H1 (cell line): ENCODE measurements at regions of chr1 and their contacts with region 1.

Region 1: DNA sequence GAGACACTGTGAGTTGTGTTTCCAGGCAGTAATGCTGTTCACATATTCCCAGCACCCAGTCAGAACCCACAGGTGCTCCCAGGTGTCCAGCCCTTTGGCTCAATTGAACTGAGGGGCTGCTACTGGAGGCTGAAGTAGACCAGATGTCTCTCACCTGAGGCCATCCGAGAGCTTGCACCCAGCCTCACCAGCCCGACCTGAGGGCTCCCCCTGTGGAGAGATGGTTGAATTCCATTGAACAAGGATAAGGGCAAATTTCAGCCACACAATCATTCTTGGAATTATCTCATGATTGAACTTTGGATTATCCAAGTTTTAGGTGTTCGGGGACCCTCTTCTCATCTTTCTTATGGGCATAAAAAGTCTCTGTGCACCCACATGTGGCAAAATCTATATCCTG is 52.1 kb downstream of the OBSCN start:
- DNase-seq: peak in 1 of 2 experiments; percentile 50
- H3K4me3 ChIP-seq: no peak overlapping the region
- H3K27ac ChIP-seq: no peak overlapping the region
- H3K4me1 ChIP-seq: no peaks in the 10 kb centered on the region
- H3K27me3 ChIP-seq: no peaks in the 10 kb centered on the region
- CTCF ChIP-seq: peak; percentile 53 to 58 (median 55)
- EP300 ChIP-seq: no peak
- POLR2A ChIP-seq: no peak
- RAD21 ChIP-seq: peak; percentile 37 to 46

Region 2: GRCh38 chr1:228162286-228163003 is 97.5 kb before region 1 on chr1:
- CTCF ChIA-PET with region 1: no interaction called
- POLR2A ChIA-PET with region 1: no interaction called
- DNase-seq: no peak
- H3K4me3 ChIP-seq: no peak overlapping the region
- H3K27ac ChIP-seq: no peak overlapping the region
- H3K4me1 ChIP-seq: peaks cover 0 to 12% (median 8%) of the 10 kb centered on the region in 4 experiments; a peak in 6 of 7 replicates
- H3K27me3 ChIP-seq: peaks cover 0 to 3% (median 0%) of the 10 kb centered on the region in 4 experiments; a peak in 4 of 7 replicates
- CTCF ChIP-seq: no peak
- EP300 ChIP-seq: no peak
- POLR2A ChIP-seq: no peak
- RAD21 ChIP-seq: no peak

Region 3: GRCh38 chr1:228172591-228173580 is 87.1 kb before region 1 on chr1:
- CTCF ChIA-PET with region 1: no interaction called
- POLR2A ChIA-PET with region 1: no interaction called
- DNase-seq: no peak
- H3K4me3 ChIP-seq: no peak overlapping the region
- H3K27ac ChIP-seq: no peak overlapping the region
- H3K4me1 ChIP-seq: peaks cover 0 to 6% (median 4%) of the 10 kb centered on the region in 4 experiments; a peak in 4 of 7 replicates
- H3K27me3 ChIP-seq: no peaks in the 10 kb centered on the region
- CTCF ChIP-seq: no peak
- EP300 ChIP-seq: no peak
- POLR2A ChIP-seq: no peak
- RAD21 ChIP-seq: no peak

Region 4: GRCh38 chr1:228274452-228275221 is 14.7 kb after region 1 on chr1:
- CTCF ChIA-PET with region 1: interaction called, 12 read pairs
- POLR2A ChIA-PET with region 1: interaction called, 3 read pairs
- DNase-seq: no peak
- H3K4me3 ChIP-seq: peak overlapping the region in 1 of 4 experiments; percentile 71; a peak in 1 of 8 replicates
- H3K27ac ChIP-seq: no peak overlapping the region
- H3K4me1 ChIP-seq: peaks cover 0 to 7% (median 1%) of the 10 kb centered on the region in 4 experiments; a peak in 4 of 7 replicates
- H3K27me3 ChIP-seq: peaks cover 0 to 5% (median 3%) of the 10 kb centered on the region in 4 experiments; a peak in 2 of 7 replicates
- CTCF ChIP-seq: peak in 1 of 3 experiments; percentile 19; a peak in 1 of 4 replicates
- EP300 ChIP-seq: no peak
- POLR2A ChIP-seq: no peak
- RAD21 ChIP-seq: no peak; a peak in 1 of 4 replicates

Region 5: GRCh38 chr1:228281933-228282645 is 22.1 kb after region 1 on chr1:
- CTCF ChIA-PET with region 1: interaction called, 16 read pairs
- POLR2A ChIA-PET with region 1: no interaction called
- DNase-seq: no peak
- H3K4me3 ChIP-seq: no peak overlapping the region
- H3K27ac ChIP-seq: no peak overlapping the region
- H3K4me1 ChIP-seq: no peaks in the 10 kb centered on the region; a peak in 1 of 7 replicates
- H3K27me3 ChIP-seq: no peaks in the 10 kb centered on the region
- CTCF ChIP-seq: no peak
- EP300 ChIP-seq: no peak
- POLR2A ChIP-seq: no peak
- RAD21 ChIP-seq: no peak

Region 6: GRCh38 chr1:228367798-228368791 is 108.1 kb after region 1 on chr1:
- CTCF ChIA-PET with region 1: no interaction called
- POLR2A ChIA-PET with region 1: no interaction called
- DNase-seq: no peak
- H3K4me3 ChIP-seq: no peak overlapping the region
- H3K27ac ChIP-seq: no peak overlapping the region
- H3K4me1 ChIP-seq: peaks cover 0 to 16% (median 5%) of the 10 kb centered on the region in 4 experiments; a peak in 4 of 7 replicates
- H3K27me3 ChIP-seq: no peaks in the 10 kb centered on the region; a peak in 3 of 7 replicates
- CTCF ChIP-seq: no peak
- EP300 ChIP-seq: no peak
- POLR2A ChIP-seq: no peak
- RAD21 ChIP-seq: no peak

Region 7: GRCh38 chr1:228416217-228416933 is 156.4 kb after region 1 on chr1 and contains the start of gene TRIM17:
- CTCF ChIA-PET with region 1: no interaction called
- POLR2A ChIA-PET with region 1: no interaction called
- DNase-seq: peak in 1 of 2 experiments; percentile 89
- H3K4me3 ChIP-seq: peak within 1 kb of the TSS; percentile 30 to 60 (median 58)
- H3K27ac ChIP-seq: no peak within 1 kb of the TSS
- H3K4me1 ChIP-seq: peaks cover 2 to 9% (median 6%) of the 10 kb centered on the region in 4 experiments
- H3K27me3 ChIP-seq: peaks cover 3 to 64% (median 35%) of the 10 kb centered on the region in 4 experiments
- CTCF ChIP-seq: peak; percentile 55 to 63 (median 56)
- EP300 ChIP-seq: no peak
- POLR2A ChIP-seq: no peak
- RAD21 ChIP-seq: peak; percentile 33 to 46; a peak in 2 of 4 replicates
- total RNA-seq, gene TRIM17: 2.2 and 2.3 TPM in 2 replicates